ENCODE measurements at regions of chr6 and their contacts with region 1.

Region 1: DNA sequence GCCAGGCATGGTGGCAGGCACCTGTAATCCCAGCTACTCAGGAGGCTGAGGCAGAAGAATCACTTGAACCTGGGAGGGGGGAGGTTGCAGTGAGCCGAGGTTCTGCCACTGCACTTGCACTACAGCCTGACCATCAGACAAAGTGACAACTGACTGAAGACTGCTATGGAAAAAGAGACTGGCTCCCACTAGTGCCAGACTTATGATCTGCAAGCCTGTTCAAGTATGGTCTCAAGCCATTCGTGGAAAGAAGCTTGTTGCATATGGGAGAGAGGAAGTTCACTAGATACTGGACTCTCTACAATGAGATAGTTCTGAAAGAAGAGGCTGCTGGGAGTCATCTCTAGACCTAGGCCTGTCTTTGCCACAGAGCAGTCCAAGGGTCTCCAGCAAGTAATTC is 26.7 kb downstream of the MDN1 start:
- DNase-seq: no peak
- H3K4me3 ChIP-seq: no peak overlapping the region
- H3K27ac ChIP-seq: no peak overlapping the region
- H3K4me1 ChIP-seq: peaks cover 0 to 3% (median 0%) of the 10 kb centered on the region in 4 experiments; a peak in 2 of 7 replicates
- H3K27me3 ChIP-seq: peaks cover 0 to 2% (median 0%) of the 10 kb centered on the region in 4 experiments; a peak in 1 of 7 replicates
- CTCF ChIP-seq: peak in 2 of 3 experiments; percentile 34 to 65; a peak in 3 of 4 replicates
- EP300 ChIP-seq: no peak
- POLR2A ChIP-seq: no peak
- RAD21 ChIP-seq: peak; percentile 19 to 53; a peak in 3 of 4 replicates

Region 2: DNA sequence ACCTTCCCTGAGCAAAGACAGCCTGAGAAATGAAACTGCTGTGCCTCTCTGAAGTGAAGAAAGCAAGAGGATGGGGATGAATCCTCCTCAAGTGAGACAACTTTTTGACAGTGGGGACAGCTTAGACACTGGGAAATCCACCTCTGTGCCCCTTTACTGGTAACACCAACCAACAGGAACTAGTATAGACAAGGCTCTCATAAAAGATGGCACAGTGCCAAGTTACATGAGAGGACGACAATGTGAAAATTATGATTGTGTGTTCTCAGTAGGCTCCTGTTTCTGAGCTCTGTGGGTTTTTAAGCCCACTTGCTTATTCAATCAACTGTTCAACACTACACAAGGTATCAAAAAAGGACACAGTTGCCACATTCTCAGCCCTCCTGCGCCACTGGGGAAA is 112.7 kb before region 1 on chr6:
- CTCF ChIA-PET with region 1: no interaction called
- POLR2A ChIA-PET with region 1: no interaction called
- DNase-seq: no peak
- H3K4me3 ChIP-seq: no peak overlapping the region
- H3K27ac ChIP-seq: 0 out of 2 replicates have a peak overlapping the region, but pooled peaks have one; percentile 26
- H3K4me1 ChIP-seq: peaks cover 12 to 26% (median 20%) of the 10 kb centered on the region in 4 experiments; a peak in 6 of 7 replicates
- H3K27me3 ChIP-seq: no peaks in the 10 kb centered on the region
- CTCF ChIP-seq: no peak
- EP300 ChIP-seq: no peak
- POLR2A ChIP-seq: no peak
- RAD21 ChIP-seq: no peak

Region 3: GRCh38 chr6:89776583-89777233 is 16.2 kb before region 1 on chr6:
- CTCF ChIA-PET with region 1: interaction called, 14 read pairs
- POLR2A ChIA-PET with region 1: no interaction called
- DNase-seq: no peak
- H3K4me3 ChIP-seq: no peak overlapping the region
- H3K27ac ChIP-seq: no peak overlapping the region
- H3K4me1 ChIP-seq: peaks cover 0 to 3% (median 0%) of the 10 kb centered on the region in 4 experiments; a peak in 2 of 7 replicates
- H3K27me3 ChIP-seq: no peaks in the 10 kb centered on the region
- CTCF ChIP-seq: no peak
- EP300 ChIP-seq: no peak
- POLR2A ChIP-seq: no peak
- RAD21 ChIP-seq: no peak

Region 4: DNA sequence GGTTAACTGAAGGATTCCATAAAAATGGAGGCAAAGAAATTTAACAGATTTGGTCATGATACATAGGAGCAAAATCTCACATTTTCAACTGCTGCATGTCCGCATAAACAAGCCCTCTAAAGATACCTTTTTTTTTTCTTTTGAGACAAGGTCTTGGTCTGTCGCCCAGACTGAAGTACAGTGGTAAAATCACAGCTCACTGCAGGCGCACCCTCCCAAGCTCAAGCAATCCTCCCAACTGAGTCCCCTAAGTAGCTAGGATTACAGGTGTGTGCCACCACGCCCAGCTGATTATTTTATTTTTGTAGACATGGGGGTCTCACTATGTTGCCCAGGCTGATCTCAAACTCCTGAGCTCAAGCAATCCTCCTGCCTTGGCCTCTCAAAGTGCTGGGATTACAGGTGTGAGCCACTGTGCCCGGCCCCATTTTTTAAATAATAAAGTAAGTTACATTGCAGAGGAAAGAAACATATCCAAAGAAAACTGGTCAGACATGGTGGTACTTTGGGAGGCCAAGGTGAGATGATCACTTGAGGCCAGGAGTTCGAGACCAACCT is 13.0 kb after region 1 on chr6:
- CTCF ChIA-PET with region 1: interaction called, 27 read pairs
- POLR2A ChIA-PET with region 1: interaction called, 3 read pairs
- DNase-seq: no peak
- H3K4me3 ChIP-seq: no peak overlapping the region
- H3K27ac ChIP-seq: no peak overlapping the region
- H3K4me1 ChIP-seq: peaks cover 0 to 8% (median 3%) of the 10 kb centered on the region in 4 experiments; a peak in 3 of 7 replicates
- H3K27me3 ChIP-seq: no peaks in the 10 kb centered on the region
- CTCF ChIP-seq: no peak
- EP300 ChIP-seq: no peak
- POLR2A ChIP-seq: no peak
- RAD21 ChIP-seq: no peak

Region 5: DNA sequence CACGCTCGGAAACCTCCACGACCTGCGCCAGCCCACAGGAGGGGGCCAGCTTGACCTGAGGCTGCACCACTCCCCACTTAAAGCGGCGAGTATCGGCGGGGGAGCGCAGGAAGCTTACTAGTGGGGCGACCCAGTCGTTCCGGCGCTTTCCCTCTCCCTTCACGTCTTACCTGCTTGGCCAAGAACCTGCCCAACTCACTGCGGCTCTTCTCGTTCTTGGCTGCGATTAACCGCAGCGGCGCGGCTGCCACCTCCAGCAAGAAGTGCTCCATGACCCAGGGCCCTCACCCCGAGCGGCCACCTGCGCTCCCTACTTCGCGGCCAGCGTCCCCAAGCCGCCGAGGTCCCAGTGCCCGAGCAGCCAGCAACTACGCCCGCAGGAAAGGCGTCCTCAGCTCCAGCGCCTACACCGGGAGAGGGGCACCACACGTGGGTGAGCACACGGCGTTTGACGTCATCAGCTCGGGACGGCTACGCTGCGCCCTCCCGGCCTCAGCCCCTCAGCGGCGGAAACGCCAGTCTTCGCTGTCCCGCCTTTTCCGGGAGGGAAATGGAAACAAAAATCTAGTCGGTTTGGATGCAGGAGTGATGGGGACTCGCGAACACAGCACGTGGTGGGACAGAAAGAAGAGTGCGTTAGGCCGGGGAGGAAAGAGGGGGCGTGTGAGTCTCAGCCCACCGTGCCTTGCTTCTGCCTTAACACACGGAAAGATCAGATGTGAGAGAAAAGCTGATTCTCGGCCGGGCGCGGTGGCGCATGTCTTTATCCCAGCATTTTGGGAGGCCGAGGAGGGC is 26.7 kb after region 1 on chr6 and contains the start of gene MDN1:
- CTCF ChIA-PET with region 1: interaction called, 9 read pairs
- POLR2A ChIA-PET with region 1: interaction called, 14 read pairs
- DNase-seq: peak; percentile 88 to 90
- H3K4me3 ChIP-seq: peak within 1 kb of the TSS; percentile 83 to 93 (median 91)
- H3K27ac ChIP-seq: peak within 1 kb of the TSS; percentile 93
- H3K4me1 ChIP-seq: peaks cover 4 to 18% (median 11%) of the 10 kb centered on the region in 4 experiments
- H3K27me3 ChIP-seq: no peaks in the 10 kb centered on the region
- CTCF ChIP-seq: no peak
- EP300 ChIP-seq: 0 out of 3 replicates have a peak, but pooled peaks of 1 of the 2 experiments have one; percentile 28
- POLR2A ChIP-seq: peak; percentile 82 to 89
- RAD21 ChIP-seq: no peak
- total RNA-seq, gene MDN1: 175 and 179 TPM in 2 replicates

Measured in H1 (cell line).